AG04449 (cell line): ENCODE measurements at regions of chr22 and their contacts with region 1.

Region 1: GRCh38 chr22:44735540-44736488 is 16.6 kb upstream of the ARHGAP8 start:
- DNase-seq: no peak
- H3K4me3 ChIP-seq: no peak overlapping the region
- CTCF ChIP-seq: peak; percentile 96

Region 2: GRCh38 chr22:44701824-44702478 is 33.9 kb before region 1 on chr22 and contains the start of gene PRR5:
- CTCF ChIA-PET with region 1: interaction called, 470 read pairs
- POLR2A ChIA-PET with region 1: interaction called, 10 read pairs
- DNase-seq: peak; percentile 63
- H3K4me3 ChIP-seq: peak within 1 kb of the TSS; percentile 65
- CTCF ChIP-seq: no peak

Region 3: GRCh38 chr22:44723801-44724200 is 12.0 kb before region 1 on chr22:
- CTCF ChIA-PET with region 1: interaction called, 84 read pairs
- POLR2A ChIA-PET with region 1: interaction called, 3 read pairs
- DNase-seq: no peak
- H3K4me3 ChIP-seq: no peak overlapping the region
- CTCF ChIP-seq: no peak